ENCODE measurements at regions of chrX and their contacts with region 1.

Region 1: GRCh38 chrX:21940356-21940829 is at the start of gene SMS:
- DNase-seq: peak; percentile 78
- ATAC-seq: peak; percentile 65
- H3K4me3 Mint-ChIP-seq: peak within 1 kb of the TSS; percentile 83
- H3K27ac Mint-ChIP-seq: peak within 1 kb of the TSS; percentile 91
- H3K4me1 Mint-ChIP-seq: peaks cover 32% of the 10 kb centered on the region
- H3K27me3 Mint-ChIP-seq: no peaks in the 10 kb centered on the region
- total RNA-seq, gene SMS: 100 to 124 TPM

Region 2: DNA sequence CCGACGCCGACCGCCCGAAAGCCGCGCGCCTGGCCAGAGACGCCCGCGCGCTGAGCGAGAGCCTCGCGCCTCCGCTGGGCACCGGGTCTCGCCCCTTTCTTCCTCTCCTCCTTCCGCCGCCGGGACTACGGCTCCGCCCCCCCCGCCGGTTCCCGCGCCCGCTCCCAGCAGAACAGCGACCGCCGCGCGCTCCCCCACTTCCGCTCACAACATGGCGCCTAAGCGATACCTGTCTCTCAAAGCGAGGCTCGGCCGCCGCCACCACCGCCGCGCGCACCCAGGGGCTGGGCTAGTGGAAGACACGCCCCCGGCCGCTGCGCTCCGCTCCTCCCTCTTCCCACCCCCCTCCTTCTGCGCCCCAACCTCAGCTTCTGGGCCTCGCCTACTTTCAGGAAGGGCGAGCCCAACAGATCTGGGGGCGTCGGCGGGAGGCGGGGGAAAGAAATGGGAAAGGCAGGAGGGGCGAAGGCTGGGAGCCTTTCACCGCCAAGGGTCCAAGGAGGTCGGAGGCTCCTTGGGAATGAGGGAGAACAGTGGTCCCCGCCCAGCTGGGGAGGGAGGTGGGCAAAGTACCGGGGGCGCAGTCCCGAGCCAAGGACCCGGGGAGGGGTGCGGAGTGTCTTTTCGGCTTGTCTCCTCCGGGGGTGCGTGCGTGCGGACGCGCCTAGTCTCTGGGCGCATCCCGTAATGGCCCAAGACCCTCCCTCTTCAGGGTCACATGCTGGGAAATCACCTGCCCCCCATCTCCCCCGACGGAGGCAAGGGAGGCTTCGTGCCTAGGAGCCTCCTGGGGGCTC is 1673.4 kb before region 1 on chrX and contains the start of gene RPS6KA3:
- CTCF ChIA-PET with region 1: no interaction called
- POLR2A ChIA-PET with region 1: no interaction called
- intact Hi-C with region 1: loop called (anchors 10 kb)
- DNase-seq: peak; percentile 94
- ATAC-seq: peak; percentile 83
- H3K4me3 Mint-ChIP-seq: peak within 1 kb of the TSS; percentile 82
- H3K27ac Mint-ChIP-seq: peak within 1 kb of the TSS; percentile 91
- H3K4me1 Mint-ChIP-seq: peaks cover 18% of the 10 kb centered on the region
- H3K27me3 Mint-ChIP-seq: no peaks in the 10 kb centered on the region
- total RNA-seq, gene RPS6KA3: 40.7 to 41.5 TPM

Region 3: DNA sequence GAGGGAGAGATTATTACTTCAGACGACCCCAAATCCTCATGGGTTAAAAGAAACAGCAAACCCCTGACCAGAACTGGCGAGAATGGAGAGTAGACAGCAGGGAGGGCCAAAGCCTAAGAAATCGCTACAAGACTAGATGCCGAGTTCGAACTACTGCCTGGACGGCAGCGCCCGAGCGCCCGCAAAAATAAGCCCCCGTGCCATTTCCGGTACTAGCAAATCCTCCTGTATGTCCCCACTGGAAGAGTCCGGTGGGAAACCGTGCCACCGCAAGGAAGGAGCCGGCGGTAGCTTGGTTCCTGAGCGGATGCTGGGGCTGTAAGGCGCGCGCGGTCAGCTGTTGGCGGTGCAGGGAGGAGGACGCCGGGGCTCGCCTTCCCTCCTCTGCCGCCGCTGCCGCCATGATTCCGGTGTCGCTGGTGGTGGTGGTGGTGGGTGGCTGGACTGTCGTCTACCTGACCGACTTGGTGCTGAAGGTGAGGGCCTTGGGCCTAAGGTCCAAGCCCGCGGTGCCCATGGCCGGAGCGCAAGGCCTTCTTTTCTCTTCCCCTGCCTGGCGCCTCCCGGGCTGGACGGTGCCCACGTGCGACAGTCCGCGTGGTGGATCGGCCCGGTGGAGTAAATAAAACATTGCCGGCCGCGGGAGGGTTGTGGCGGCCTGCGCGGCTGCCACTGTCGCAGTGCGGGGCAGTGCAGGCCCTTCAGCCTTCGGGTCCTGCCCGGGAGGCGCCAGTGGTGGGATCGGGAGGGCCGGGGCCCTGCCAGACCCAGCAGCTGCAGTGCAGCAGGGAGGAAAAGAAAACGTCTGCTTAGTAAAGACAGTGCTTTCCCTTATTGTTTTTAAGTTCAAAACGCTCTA is 100.8 kb before region 1 on chrX and contains the start of gene MBTPS2:
- CTCF ChIA-PET with region 1: interaction called, 3 read pairs
- POLR2A ChIA-PET with region 1: no interaction called
- intact Hi-C with region 1: loop called (anchors 1 to 5 kb)
- DNase-seq: peak; percentile 90
- ATAC-seq: peak; percentile 87
- H3K4me3 Mint-ChIP-seq: peak within 1 kb of the TSS; percentile 84
- H3K27ac Mint-ChIP-seq: peak within 1 kb of the TSS; percentile 92
- H3K4me1 Mint-ChIP-seq: peaks cover 11% of the 10 kb centered on the region
- H3K27me3 Mint-ChIP-seq: no peaks in the 10 kb centered on the region
- total RNA-seq, gene MBTPS2: 6.9 to 7.8 TPM

Region 4: GRCh38 chrX:21853578-21853977 is 86.8 kb before region 1 on chrX:
- CTCF ChIA-PET with region 1: no interaction called
- POLR2A ChIA-PET with region 1: no interaction called
- intact Hi-C with region 1: no loop called
- DNase-seq: no peak
- ATAC-seq: no peak
- H3K4me3 Mint-ChIP-seq: no peak overlapping the region
- H3K27ac Mint-ChIP-seq: no peak overlapping the region
- H3K4me1 Mint-ChIP-seq: no peaks in the 10 kb centered on the region
- H3K27me3 Mint-ChIP-seq: no peaks in the 10 kb centered on the region

Region 5: DNA sequence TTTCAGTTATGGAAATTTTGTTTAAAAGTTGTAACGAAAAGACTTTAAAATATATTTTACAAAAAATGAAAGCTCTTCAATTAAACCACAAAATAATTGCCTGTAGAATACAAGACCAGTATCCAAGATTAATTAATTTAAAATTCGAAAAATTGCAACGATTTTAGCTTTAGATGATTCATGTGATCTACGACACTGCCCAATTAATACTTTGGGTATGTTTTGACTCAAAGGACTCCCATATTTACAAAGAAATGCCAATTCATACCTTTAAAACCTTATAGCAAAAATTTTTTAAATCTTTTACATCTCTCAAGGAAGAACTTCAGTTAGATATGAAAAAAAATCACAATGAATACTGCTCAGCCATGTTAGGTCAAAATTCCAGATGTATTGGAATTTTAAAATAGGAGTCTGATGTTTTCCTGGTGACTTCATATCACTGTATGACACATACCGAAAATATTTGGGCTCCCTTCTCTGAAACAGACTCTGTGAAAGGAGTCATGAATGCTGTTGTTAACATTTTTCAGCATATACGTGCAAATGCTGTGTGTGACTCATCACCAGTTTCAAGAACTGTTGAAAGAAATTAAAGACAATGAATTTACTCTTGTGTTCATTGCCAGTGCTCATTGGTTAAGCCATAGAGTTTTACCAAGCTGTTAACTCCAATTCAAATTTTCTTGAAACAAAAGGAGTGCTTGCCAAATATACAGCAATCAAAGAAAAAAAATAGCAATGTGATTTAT is 13.7 kb before region 1 on chrX:
- CTCF ChIA-PET with region 1: interaction called, 4 read pairs
- POLR2A ChIA-PET with region 1: no interaction called
- intact Hi-C with region 1: loop called (anchors 1 kb)
- DNase-seq: no peak
- ATAC-seq: peak; percentile 88
- H3K4me3 Mint-ChIP-seq: no peak overlapping the region
- H3K27ac Mint-ChIP-seq: peak overlapping the region; percentile 83
- H3K4me1 Mint-ChIP-seq: peaks cover 30% of the 10 kb centered on the region
- H3K27me3 Mint-ChIP-seq: no peaks in the 10 kb centered on the region

Region 6: GRCh38 chrX:21972721-21973120 is 32.3 kb after region 1 on chrX:
- CTCF ChIA-PET with region 1: no interaction called
- POLR2A ChIA-PET with region 1: no interaction called
- intact Hi-C with region 1: loop called in 1 of 2 experiments (anchors 2 kb)
- DNase-seq: peak; percentile 68
- ATAC-seq: peak; percentile 81
- H3K4me3 Mint-ChIP-seq: no peak overlapping the region
- H3K27ac Mint-ChIP-seq: peak overlapping the region; percentile 88
- H3K4me1 Mint-ChIP-seq: peaks cover 38% of the 10 kb centered on the region
- H3K27me3 Mint-ChIP-seq: no peaks in the 10 kb centered on the region

Region 7: GRCh38 chrX:22063284-22063683 is 122.9 kb after region 1 on chrX:
- CTCF ChIA-PET with region 1: no interaction called
- POLR2A ChIA-PET with region 1: no interaction called
- intact Hi-C with region 1: loop called in 1 of 2 experiments (anchors 5 kb)
- DNase-seq: peak; percentile 59
- ATAC-seq: peak; percentile 33
- H3K4me3 Mint-ChIP-seq: no peak overlapping the region
- H3K27ac Mint-ChIP-seq: peak overlapping the region; percentile 63
- H3K4me1 Mint-ChIP-seq: peaks cover 72% of the 10 kb centered on the region
- H3K27me3 Mint-ChIP-seq: no peaks in the 10 kb centered on the region

Region 8: DNA sequence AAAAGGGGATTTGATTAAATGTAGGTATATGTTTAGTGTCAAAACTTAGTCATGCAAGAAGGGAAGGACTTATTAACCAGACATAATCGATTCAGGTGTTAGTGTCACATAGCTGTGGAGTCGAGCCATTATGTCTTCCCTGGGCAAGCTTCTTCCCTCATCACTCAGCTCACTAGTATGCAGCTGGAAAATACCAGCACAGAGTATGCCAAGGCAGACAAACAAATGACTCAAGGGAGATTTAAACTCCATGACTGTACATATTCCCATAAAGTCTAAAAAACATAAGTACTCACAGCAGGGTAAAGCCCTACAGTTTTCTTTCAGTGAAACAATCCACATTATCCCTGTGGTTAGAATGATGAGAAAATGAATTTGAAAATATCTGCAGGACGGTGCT is 636.8 kb after region 1 on chrX:
- CTCF ChIA-PET with region 1: no interaction called
- POLR2A ChIA-PET with region 1: no interaction called
- intact Hi-C with region 1: no loop called
- DNase-seq: no peak
- ATAC-seq: no peak
- H3K4me3 Mint-ChIP-seq: no peak overlapping the region
- H3K27ac Mint-ChIP-seq: no peak overlapping the region
- H3K4me1 Mint-ChIP-seq: no peaks in the 10 kb centered on the region
- H3K27me3 Mint-ChIP-seq: no peaks in the 10 kb centered on the region

Measured in activated CD4-positive, alpha-beta T cell treated with anti-CD3 and anti-CD28 coated beads for 36 hours (primary cell).